Posterior cingulate gyrus (tissue), 11 donors: ENCODE measurements at regions of chr4 and their contacts with region 1.

Region 1: DNA sequence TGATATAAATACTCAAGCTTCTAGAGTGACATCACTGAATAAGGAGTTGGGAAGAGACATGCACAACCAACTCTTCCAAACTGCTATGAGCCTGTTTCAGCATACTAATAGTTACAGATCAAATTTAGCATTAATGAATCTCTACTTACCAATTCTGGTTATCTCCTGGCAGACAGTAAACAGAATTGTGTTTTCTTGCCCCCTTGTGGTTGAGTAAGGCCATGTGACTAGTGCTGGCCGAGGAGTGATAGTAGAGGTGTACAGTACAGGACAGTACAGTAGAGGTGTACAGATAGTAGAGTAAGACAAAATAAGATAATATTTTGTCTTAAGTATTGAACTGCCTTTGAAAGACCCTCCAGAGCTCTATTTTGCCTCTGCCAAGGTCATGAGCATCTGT is 681.4 kb downstream of the GABRG1 start:
- DNase-seq: no peak

Region 2: GRCh38 chr4:44583393-44583792 is 859.1 kb before region 1 on chr4:
- intact Hi-C with region 1: no loop called
- DNase-seq: no peak

Region 3: GRCh38 chr4:44760142-44760898 is 682.1 kb before region 1 on chr4:
- intact Hi-C with region 1: loop called (anchors 5 kb)
- DNase-seq: no peak

Region 4: DNA sequence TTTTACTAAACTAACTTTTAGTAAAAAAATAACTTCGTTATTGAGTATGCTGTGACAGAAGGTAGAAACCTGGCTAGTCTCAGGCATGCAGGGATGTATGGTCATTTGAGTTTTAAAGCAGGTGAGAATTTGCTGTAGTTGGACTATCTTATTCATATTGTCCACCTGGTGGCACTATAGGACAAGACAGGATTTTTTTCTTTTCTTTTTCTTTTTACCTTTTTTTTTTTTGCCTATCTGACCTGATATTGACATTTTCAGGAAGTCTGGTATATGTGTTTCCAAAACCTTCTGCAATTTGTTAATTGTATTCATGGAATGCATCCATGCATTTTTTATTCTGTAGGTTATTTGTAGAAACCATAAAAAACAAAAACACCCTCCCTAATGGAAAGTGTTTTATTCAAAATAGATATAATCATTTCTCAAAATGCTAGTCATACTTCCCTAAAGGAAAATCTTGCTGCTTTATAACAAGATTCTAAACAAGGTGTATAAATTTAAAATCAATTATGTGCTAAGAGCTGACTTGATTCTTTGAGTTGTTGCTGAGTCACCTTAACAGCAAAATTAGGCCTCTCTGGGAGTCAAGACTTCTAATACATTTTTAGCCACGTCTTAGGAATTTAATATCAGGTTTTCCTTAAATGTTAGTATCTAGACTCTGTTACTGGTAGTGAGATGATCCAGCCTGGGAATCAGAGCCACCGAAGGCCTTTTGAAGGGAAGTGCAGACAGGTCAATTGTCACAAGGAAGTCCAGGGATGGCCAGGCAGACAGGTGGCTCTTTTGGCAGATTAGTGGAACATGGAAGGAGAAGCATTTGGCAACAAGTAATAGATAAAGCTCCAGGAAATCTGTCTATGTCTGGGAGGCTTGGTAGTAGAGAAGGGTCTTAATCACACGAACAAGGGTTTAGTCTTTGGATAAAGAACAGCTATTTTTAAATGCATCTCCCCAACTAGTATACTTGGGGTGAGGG is 514.8 kb before region 1 on chr4:
- intact Hi-C with region 1: loop called (anchors 2 kb)
- DNase-seq: no peak